PC-9 (cell line): ENCODE measurements at regions of chr11 and their contacts with region 1.

Region 1: DNA sequence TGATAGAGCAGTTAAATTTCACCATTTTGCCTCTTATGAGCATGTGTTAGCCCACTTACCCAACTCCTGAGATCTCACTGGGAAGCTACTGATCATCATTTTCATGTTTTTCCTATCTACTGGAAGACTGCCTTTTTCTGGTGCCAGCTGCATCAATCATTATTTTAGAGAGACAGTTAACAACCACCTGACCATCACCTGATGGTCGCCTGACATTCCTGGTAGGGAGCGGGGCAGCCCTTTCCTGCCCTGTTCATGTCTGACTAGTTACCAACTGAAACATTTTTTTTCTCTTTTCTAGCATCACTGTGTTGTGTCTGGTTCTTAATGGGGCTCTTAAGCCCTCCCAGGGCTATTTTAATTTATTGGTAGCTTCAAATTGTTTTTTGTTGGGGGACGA is 20.2 kb upstream of the PATL1 start:
- DNase-seq: peak in 1 of 2 experiments; percentile 8
- H3K4me3 ChIP-seq: no peak overlapping the region
- H3K27ac ChIP-seq: no peak overlapping the region
- H3K4me1 ChIP-seq: peaks cover 8% of the 10 kb centered on the region
- H3K27me3 ChIP-seq: no peaks in the 10 kb centered on the region
- CTCF ChIP-seq: no peak

Region 2: DNA sequence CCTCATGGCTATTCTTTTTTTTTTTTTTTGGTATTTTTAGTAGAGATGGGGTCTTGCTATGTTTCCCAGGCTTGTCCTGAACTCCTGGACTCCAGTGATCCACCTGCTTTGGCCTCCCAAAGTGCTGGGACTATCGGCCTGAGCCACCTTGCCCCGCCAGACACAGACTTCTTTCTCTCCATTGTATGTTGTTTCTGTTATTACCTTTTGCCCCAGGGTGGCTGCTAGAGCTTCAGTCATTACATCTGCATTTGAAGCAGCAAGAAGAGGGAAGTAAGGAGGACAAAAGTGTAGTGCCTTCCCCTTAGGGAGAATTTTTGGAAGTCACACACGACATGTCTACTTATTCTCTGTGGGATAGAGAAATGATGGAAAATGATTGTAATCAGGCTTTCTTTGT is 63.3 kb before region 1 on chr11:
- CTCF ChIA-PET with region 1: no interaction called
- POLR2A ChIA-PET with region 1: interaction called, 10 read pairs
- intact Hi-C with region 1: no loop called
- DNase-seq: no peak
- H3K4me3 ChIP-seq: no peak overlapping the region
- H3K27ac ChIP-seq: no peak overlapping the region
- H3K4me1 ChIP-seq: peaks cover 17% of the 10 kb centered on the region
- H3K27me3 ChIP-seq: no peaks in the 10 kb centered on the region
- CTCF ChIP-seq: no peak